ENCODE measurements at regions of chr5 and their contacts with region 1.

Region 1: GRCh38 chr5:148730943-148731861 is 76.9 kb upstream of the HTR4 start:
- DNase-seq: peak; percentile 83
- ATAC-seq: peak; percentile 86
- H3K4me3 ChIP-seq: peak overlapping the region; percentile 16 to 45
- H3K27ac ChIP-seq: no peak overlapping the region
- H3K4me1 ChIP-seq: peaks cover 0 to 9% of the 10 kb centered on the region in 2 experiments; a peak in 2 of 4 replicates
- H3K27me3 ChIP-seq: peaks cover 9% of the 10 kb centered on the region; the same call in 1 of the 2 replicates
- CTCF ChIP-seq: peak; percentile 68 to 99 (median 95)
- POLR2A ChIP-seq: no peak
- RAD21 ChIP-seq: peak; percentile 97

Region 2: GRCh38 chr5:147857302-147858129 is 873.7 kb before region 1 on chr5:
- CTCF ChIA-PET with region 1: interaction called, 12 read pairs
- POLR2A ChIA-PET with region 1: no interaction called
- RAD21 ChIA-PET with region 1: no interaction called
- intact Hi-C with region 1: no loop called
- DNase-seq: peak; percentile 47
- ATAC-seq: peak; percentile 78
- H3K4me3 ChIP-seq: no peak overlapping the region
- H3K27ac ChIP-seq: no peak overlapping the region
- H3K4me1 ChIP-seq: no peaks in the 10 kb centered on the region
- H3K27me3 ChIP-seq: peaks cover 5% of the 10 kb centered on the region; the same call in 1 of the 2 replicates
- CTCF ChIP-seq: peak; percentile 57 to 81 (median 76); a peak in 5 of 6 replicates
- POLR2A ChIP-seq: no peak
- RAD21 ChIP-seq: peak; percentile 71

Region 3: GRCh38 chr5:148290271-148291195 is 440.7 kb before region 1 on chr5:
- CTCF ChIA-PET with region 1: interaction called, 19 read pairs
- POLR2A ChIA-PET with region 1: no interaction called
- RAD21 ChIA-PET with region 1: no interaction called
- intact Hi-C with region 1: loop called (anchors 2 kb)
- DNase-seq: peak; percentile 4
- ATAC-seq: peak; percentile 80
- H3K4me3 ChIP-seq: no peak overlapping the region
- H3K27ac ChIP-seq: no peak overlapping the region
- H3K4me1 ChIP-seq: no peaks in the 10 kb centered on the region
- H3K27me3 ChIP-seq: peaks cover 20% of the 10 kb centered on the region; the same call in 1 of the 2 replicates
- CTCF ChIP-seq: peak; percentile 39 to 57 (median 49); a peak in 5 of 6 replicates
- POLR2A ChIP-seq: no peak
- RAD21 ChIP-seq: peak; percentile 67

Region 4: DNA sequence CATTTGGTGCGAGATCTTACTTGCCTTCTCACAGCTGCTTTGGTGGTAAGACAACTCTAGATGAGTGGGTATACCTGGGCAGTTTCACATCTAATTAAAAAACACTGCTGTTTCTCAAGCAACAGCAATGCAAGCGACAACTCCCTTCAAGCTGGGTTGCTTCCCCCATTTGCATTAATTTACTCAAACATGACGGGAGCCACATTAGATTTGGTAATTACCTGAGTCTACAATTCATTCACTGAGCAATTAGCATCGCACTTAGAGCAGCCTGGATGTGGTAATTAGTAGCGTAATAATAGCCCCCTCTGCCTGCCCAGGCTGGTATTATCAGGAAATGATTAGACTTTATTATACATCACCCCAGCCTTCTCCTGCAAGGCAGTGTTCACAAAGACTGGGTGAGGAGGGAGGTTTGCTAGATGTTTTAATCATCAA is 274.0 kb before region 1 on chr5:
- CTCF ChIA-PET with region 1: interaction called, 18 read pairs
- POLR2A ChIA-PET with region 1: no interaction called
- RAD21 ChIA-PET with region 1: no interaction called
- intact Hi-C with region 1: no loop called
- DNase-seq: no peak
- ATAC-seq: peak; percentile 89
- H3K4me3 ChIP-seq: no peak overlapping the region
- H3K27ac ChIP-seq: no peak overlapping the region
- H3K4me1 ChIP-seq: no peaks in the 10 kb centered on the region
- H3K27me3 ChIP-seq: peaks cover 14% of the 10 kb centered on the region
- CTCF ChIP-seq: peak; percentile 53 to 60 (median 54); a peak in 5 of 6 replicates
- POLR2A ChIP-seq: no peak
- RAD21 ChIP-seq: peak; percentile 51

Region 5: GRCh38 chr5:148957591-148958202 is 226.5 kb after region 1 on chr5:
- CTCF ChIA-PET with region 1: interaction called, 55 read pairs
- POLR2A ChIA-PET with region 1: no interaction called
- RAD21 ChIA-PET with region 1: interaction called in 1 of 2 experiments, 6 read pairs
- intact Hi-C with region 1: no loop called
- DNase-seq: no peak
- ATAC-seq: peak; percentile 76
- H3K4me3 ChIP-seq: no peak overlapping the region
- H3K27ac ChIP-seq: no peak overlapping the region
- H3K4me1 ChIP-seq: peaks cover 0 to 7% of the 10 kb centered on the region in 2 experiments; a peak in 1 of 4 replicates
- H3K27me3 ChIP-seq: no peaks in the 10 kb centered on the region
- CTCF ChIP-seq: peak; percentile 84 to 97 (median 90)
- POLR2A ChIP-seq: no peak
- RAD21 ChIP-seq: peak; percentile 83

Region 6: GRCh38 chr5:149035372-149035790 is 304.2 kb after region 1 on chr5:
- CTCF ChIA-PET with region 1: interaction called, 128 read pairs
- POLR2A ChIA-PET with region 1: no interaction called
- RAD21 ChIA-PET with region 1: interaction called, 4 to 5 read pairs
- intact Hi-C with region 1: loop called (anchors 1 kb)
- DNase-seq: peak; percentile 48
- ATAC-seq: peak; percentile 96
- H3K4me3 ChIP-seq: no peak overlapping the region
- H3K27ac ChIP-seq: no peak overlapping the region
- H3K4me1 ChIP-seq: peaks cover 0 to 14% of the 10 kb centered on the region in 2 experiments; a peak in 1 of 4 replicates
- H3K27me3 ChIP-seq: no peaks in the 10 kb centered on the region
- CTCF ChIP-seq: peak; percentile 89 to 92 (median 90)
- POLR2A ChIP-seq: no peak
- RAD21 ChIP-seq: peak; percentile 96

Region 7: GRCh38 chr5:149205625-149206523 is 474.7 kb after region 1 on chr5:
- CTCF ChIA-PET with region 1: no interaction called
- POLR2A ChIA-PET with region 1: no interaction called
- RAD21 ChIA-PET with region 1: no interaction called
- intact Hi-C with region 1: no loop called
- DNase-seq: no peak
- ATAC-seq: no peak
- H3K4me3 ChIP-seq: no peak overlapping the region
- H3K27ac ChIP-seq: no peak overlapping the region
- H3K4me1 ChIP-seq: peaks cover 14 to 65% of the 10 kb centered on the region in 2 experiments
- H3K27me3 ChIP-seq: no peaks in the 10 kb centered on the region
- CTCF ChIP-seq: no peak
- POLR2A ChIP-seq: no peak
- RAD21 ChIP-seq: no peak

Region 8: GRCh38 chr5:149268928-149269557 is 537.8 kb after region 1 on chr5:
- CTCF ChIA-PET with region 1: interaction called, 11 read pairs
- POLR2A ChIA-PET with region 1: no interaction called
- RAD21 ChIA-PET with region 1: no interaction called
- intact Hi-C with region 1: loop called (anchors 2 kb)
- DNase-seq: peak; percentile 55
- ATAC-seq: peak; percentile 26
- H3K4me3 ChIP-seq: no peak overlapping the region
- H3K27ac ChIP-seq: no peak overlapping the region
- H3K4me1 ChIP-seq: peaks cover 0 to 8% of the 10 kb centered on the region in 2 experiments; a peak in 2 of 4 replicates
- H3K27me3 ChIP-seq: no peaks in the 10 kb centered on the region
- CTCF ChIP-seq: peak; percentile 55 to 82 (median 69)
- POLR2A ChIP-seq: no peak
- RAD21 ChIP-seq: peak; percentile 82

Measured in HCT116 (cell line).